ENCODE measurements at regions of chr1 and their contacts with region 1.

Region 1: GRCh38 chr1:42302063-42302462 is 33.0 kb downstream of the FOXJ3 start:
- DNase-seq: no peak
- ATAC-seq: no peak
- H3K4me3 ChIP-seq: no peak overlapping the region
- H3K27ac ChIP-seq: no peak overlapping the region
- H3K4me1 ChIP-seq: no peaks in the 10 kb centered on the region
- H3K27me3 ChIP-seq: no peaks in the 10 kb centered on the region
- CTCF ChIP-seq: no peak

Region 2: GRCh38 chr1:42240966-42241755 is 60.9 kb before region 1 on chr1:
- CTCF ChIA-PET with region 1: no interaction called
- POLR2A ChIA-PET with region 1: no interaction called
- in situ Hi-C with region 1: no loop called
- intact Hi-C with region 1: no loop called
- DNase-seq: no peak
- ATAC-seq: no peak
- H3K4me3 ChIP-seq: no peak overlapping the region
- H3K27ac ChIP-seq: no peak overlapping the region
- H3K4me1 ChIP-seq: no peaks in the 10 kb centered on the region
- H3K27me3 ChIP-seq: no peaks in the 10 kb centered on the region
- CTCF ChIP-seq: no peak

Region 3: GRCh38 chr1:42282024-42282579 is 20.0 kb before region 1 on chr1:
- CTCF ChIA-PET with region 1: no interaction called
- POLR2A ChIA-PET with region 1: interaction called, 10 read pairs
- in situ Hi-C with region 1: no loop called
- intact Hi-C with region 1: no loop called
- DNase-seq: no peak
- ATAC-seq: no peak
- H3K4me3 ChIP-seq: no peak overlapping the region
- H3K27ac ChIP-seq: no peak overlapping the region
- H3K4me1 ChIP-seq: peaks cover 6% of the 10 kb centered on the region
- H3K27me3 ChIP-seq: no peaks in the 10 kb centered on the region
- CTCF ChIP-seq: no peak